ENCODE measurements at regions of chr1 and their contacts with region 1.

Region 1: DNA sequence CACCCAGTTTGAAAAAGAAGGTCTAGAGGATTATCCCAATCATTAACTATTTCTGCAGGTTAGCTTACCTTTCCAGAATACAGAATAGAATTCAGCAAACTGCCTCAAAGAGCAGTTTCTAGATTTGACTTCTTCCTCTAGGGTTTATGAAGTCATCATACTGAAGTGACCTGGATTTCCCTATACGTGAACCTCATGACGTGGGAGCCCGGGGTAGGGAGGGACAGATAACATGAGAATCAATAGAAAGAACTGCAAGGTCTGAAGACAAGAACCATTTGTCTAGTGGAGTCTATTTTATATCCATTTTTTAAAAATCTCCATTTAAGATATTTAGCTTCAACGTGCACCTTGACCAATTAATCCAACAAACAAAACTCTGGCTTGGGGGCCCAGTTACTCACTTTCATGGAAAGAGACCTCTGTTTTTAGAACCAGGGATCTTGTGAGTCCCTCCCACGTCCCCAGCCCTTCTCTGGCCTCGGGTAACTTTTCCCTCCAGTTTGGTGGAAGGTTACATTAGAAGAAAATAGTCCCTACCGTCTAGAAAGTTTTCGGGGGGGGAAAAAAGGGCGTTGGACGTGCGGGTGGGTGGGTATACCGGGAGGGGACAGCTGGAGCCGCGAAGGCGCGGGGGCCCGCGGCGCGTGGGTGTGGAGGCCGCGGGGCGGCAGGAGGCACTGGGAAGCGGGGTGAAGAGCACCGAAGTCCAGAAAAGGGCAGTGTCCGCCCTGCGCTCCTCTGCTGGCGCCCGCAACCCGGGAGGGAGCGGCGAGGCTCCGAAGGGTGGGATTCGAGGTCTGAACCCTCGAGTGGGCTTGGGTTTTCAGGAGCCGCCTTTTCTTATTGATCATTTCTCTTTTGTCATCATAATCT is 13.8 kb upstream of the POGZ start:
- DNase-seq: peak; percentile 55 to 67
- H3K4me3 ChIP-seq: peak overlapping the region; percentile 76
- H3K4me3 Mint-ChIP-seq: peak overlapping the region; percentile 73
- H3K27ac Mint-ChIP-seq: peak overlapping the region; percentile 91
- H3K4me1 ChIP-seq: peaks cover 2% of the 10 kb centered on the region
- H3K4me1 Mint-ChIP-seq: peaks cover 7% of the 10 kb centered on the region
- H3K27me3 ChIP-seq: no peaks in the 10 kb centered on the region
- H3K27me3 Mint-ChIP-seq: no peaks in the 10 kb centered on the region
- CTCF ChIP-seq: no peak

Region 2: DNA sequence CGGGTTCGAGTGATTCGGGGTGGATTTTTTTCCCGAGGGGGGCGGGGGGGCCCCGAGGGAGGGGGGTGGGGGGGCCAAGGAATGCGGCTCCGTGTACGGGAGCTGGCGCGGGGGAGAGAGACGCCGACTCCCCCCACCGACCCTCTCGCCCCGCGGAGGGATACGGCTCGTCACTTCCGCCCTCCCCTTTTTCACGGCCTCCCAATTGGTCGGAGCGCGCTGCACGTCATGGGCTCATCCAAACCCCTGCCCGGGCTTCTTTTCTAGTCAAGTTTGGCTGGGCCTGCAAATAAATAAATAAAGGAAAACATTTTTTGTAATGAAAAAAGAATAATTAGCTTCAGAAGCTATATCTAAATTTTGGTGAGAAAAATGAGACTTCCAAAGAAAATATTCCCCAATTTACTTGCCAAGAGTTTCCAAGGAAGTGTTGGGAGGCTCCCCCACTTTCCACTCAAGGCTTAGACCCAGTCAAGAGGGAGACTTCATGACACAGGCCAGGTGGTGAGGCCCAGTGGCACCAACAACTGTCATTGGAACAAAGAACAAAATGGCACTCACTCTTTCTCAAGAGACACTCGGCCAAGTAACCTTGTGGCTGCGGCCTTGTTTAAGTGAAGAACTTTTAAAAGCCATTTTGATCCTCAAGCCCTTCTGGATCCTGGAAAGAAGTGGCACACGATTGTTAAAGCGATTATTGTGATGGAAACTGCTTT is 13.6 kb before region 1 on chr1 and contains the start of gene POGZ:
- CTCF ChIA-PET with region 1: interaction called, 4 read pairs
- POLR2A ChIA-PET with region 1: interaction called, 3 read pairs
- intact Hi-C with region 1: loop called (anchors 1 kb)
- DNase-seq: peak; percentile 95 to 97
- H3K4me3 ChIP-seq: peak within 1 kb of the TSS; percentile 77
- H3K4me3 Mint-ChIP-seq: peak within 1 kb of the TSS; percentile 80
- H3K27ac Mint-ChIP-seq: peak within 1 kb of the TSS; percentile 83
- H3K4me1 ChIP-seq: peaks cover 17% of the 10 kb centered on the region
- H3K4me1 Mint-ChIP-seq: peaks cover 7% of the 10 kb centered on the region
- H3K27me3 ChIP-seq: no peaks in the 10 kb centered on the region
- H3K27me3 Mint-ChIP-seq: no peaks in the 10 kb centered on the region
- CTCF ChIP-seq: no peak
- total RNA-seq, gene POGZ: 80.0 and 83.0 TPM in 2 replicates

Region 3: GRCh38 chr1:151547119-151547899 is 74.2 kb after region 1 on chr1:
- CTCF ChIA-PET with region 1: no interaction called
- POLR2A ChIA-PET with region 1: no interaction called
- intact Hi-C with region 1: no loop called
- DNase-seq: peak; percentile 92 to 96
- H3K4me3 ChIP-seq: no peak overlapping the region
- H3K4me3 Mint-ChIP-seq: peak overlapping the region; percentile 64
- H3K27ac Mint-ChIP-seq: peak overlapping the region; percentile 89
- H3K4me1 ChIP-seq: peaks cover 65% of the 10 kb centered on the region
- H3K4me1 Mint-ChIP-seq: peaks cover 62% of the 10 kb centered on the region
- H3K27me3 ChIP-seq: no peaks in the 10 kb centered on the region
- H3K27me3 Mint-ChIP-seq: no peaks in the 10 kb centered on the region
- CTCF ChIP-seq: no peak